Prostate gland (tissue), 2 donors: ENCODE measurements at regions of chr18 and their contacts with region 1.

Region 1: GRCh38 chr18:77207540-77207939 is 42.1 kb upstream of the GALR1 start:
- DNase-seq: no peak
- H3K4me3 ChIP-seq: no peak overlapping the region
- H3K27ac ChIP-seq: peak overlapping the region in 1 of 2 donors; percentile 10
- H3K4me1 ChIP-seq: peaks cover 2% of the 10 kb centered on the region
- H3K27me3 ChIP-seq: no peaks in the 10 kb centered on the region
- CTCF ChIP-seq: peak in 3 of 4 experiments; percentile 16 to 40 (median 20)
- POLR2A ChIP-seq: no peak

Region 2: DNA sequence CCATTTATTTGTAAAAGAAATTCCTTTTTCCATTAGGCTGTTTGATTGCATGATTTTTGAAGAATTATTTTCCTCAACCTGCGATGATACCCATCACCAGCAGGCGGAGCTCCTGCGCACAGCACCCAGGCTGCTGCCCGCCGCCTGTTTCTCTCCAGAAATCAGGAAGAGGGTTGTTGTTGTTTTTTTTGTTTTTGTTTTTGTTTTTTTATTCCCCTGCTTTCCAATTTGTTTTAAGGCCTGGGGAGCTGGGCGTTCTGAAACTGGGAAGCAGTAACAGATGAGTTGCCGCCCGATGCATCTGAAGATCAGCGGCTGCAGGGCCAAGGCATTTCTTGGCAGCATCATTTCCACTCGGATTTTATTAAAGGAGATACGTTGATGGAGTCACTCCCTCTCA is 207.0 kb before region 1 on chr18:
- intact Hi-C with region 1: loop called (anchors 2 kb)
- DNase-seq: peak; percentile 30
- H3K4me3 ChIP-seq: no peak overlapping the region
- H3K27ac ChIP-seq: no peak overlapping the region
- H3K4me1 ChIP-seq: no peaks in the 10 kb centered on the region
- H3K27me3 ChIP-seq: no peaks in the 10 kb centered on the region
- CTCF ChIP-seq: peak; percentile 92 to 93 (median 93)
- POLR2A ChIP-seq: no peak

Region 3: DNA sequence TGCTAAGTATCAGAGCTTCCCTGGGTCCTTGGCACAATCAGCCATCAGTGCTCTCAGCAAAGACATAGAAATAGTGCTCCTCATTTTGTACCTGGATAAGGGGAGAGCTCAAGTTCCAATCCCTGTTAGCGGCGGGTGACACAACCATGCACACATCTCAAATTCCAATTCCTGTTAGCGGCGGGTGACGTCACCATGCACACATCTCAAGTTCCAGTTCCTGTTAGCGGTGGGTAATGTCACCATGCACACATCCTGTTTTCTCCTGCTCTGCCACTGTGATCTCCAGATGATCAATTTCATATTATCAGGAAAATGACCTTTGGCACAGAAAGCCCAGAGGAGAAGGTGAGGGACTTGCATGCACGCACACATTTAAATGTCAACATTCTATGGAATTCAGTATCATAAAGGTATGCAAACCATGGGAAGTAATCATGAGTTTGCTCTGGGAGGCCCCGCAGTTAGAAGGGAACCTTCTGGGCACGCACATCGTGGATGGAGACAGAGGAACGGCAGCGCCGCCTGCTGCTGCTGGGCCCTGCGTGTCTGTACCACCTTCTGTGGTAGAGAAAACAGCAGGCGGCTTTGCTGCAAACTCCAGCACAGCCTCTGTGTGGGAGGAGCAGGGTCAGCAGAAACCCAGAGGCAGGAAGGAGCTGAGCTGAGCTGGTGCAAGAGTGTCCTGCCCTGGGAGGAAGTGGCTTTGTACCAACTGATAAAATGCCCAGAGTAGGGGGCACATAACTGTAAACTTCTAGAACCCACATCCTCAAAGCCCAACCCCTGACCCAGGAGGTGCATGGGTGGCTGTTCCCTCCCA is 152.7 kb before region 1 on chr18:
- intact Hi-C with region 1: loop called (anchors 5 kb)
- DNase-seq: peak; percentile 42
- H3K4me3 ChIP-seq: no peak overlapping the region
- H3K27ac ChIP-seq: peak overlapping the region; percentile 29 to 60
- H3K4me1 ChIP-seq: no peaks in the 10 kb centered on the region
- H3K27me3 ChIP-seq: no peaks in the 10 kb centered on the region
- CTCF ChIP-seq: peak in 3 of 4 experiments; percentile 32 to 51 (median 45)
- POLR2A ChIP-seq: no peak

Region 4: GRCh38 chr18:77067291-77068061 is 140.1 kb before region 1 on chr18:
- intact Hi-C with region 1: loop called (anchors 5 kb)
- DNase-seq: no peak
- H3K4me3 ChIP-seq: no peak overlapping the region
- H3K27ac ChIP-seq: peak overlapping the region; percentile 33 to 47
- H3K4me1 ChIP-seq: no peaks in the 10 kb centered on the region
- H3K27me3 ChIP-seq: no peaks in the 10 kb centered on the region
- CTCF ChIP-seq: no peak
- POLR2A ChIP-seq: no peak

Region 5: DNA sequence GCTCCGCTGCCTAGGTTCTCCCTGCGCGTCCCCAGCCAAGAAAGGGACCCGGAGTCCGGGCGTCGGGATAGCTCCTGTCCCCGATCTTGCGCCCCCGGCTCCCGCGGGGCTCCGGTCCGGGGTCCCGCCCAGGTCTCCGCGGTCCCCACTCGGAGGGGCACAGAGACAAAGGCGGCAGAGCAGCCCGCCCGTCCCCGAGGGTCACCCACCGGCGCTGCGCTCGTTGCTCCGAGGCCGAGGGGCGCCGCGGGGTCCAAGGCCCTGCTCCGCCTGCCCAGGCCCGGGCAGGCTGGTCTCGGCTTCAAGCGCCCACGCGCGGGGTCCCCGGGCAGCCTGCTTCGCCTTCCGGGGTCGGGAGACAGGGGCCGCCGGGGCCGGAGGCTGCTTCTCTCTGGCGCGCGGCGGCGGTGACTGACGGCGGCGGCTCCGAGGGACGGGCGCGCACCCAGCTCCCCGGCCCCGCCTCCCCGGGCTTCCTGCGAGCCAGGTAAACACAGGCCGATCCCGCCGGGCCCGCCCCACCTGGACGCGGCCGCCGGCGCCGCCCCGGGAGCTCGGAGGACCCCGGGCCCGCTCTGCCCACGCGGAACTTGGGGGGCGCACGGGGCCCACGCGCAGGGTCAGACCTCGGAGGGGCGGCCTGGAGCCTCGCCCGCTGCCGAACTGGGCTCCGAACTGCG is 75.0 kb before region 1 on chr18 and contains the start of gene MBP:
- intact Hi-C with region 1: loop called (anchors 5 kb)
- DNase-seq: peak; percentile 89
- H3K4me3 ChIP-seq: peak within 1 kb of the TSS; percentile 82 to 84
- H3K27ac ChIP-seq: peak within 1 kb of the TSS; percentile 88 to 92
- H3K4me1 ChIP-seq: no peaks in the 10 kb centered on the region
- H3K27me3 ChIP-seq: no peaks in the 10 kb centered on the region
- CTCF ChIP-seq: no peak
- POLR2A ChIP-seq: peak; percentile 95
- total RNA-seq, gene MBP: 19.8 to 43.5 TPM